ENCODE measurements at regions of chr3 and their contacts with region 1.

Region 1: DNA sequence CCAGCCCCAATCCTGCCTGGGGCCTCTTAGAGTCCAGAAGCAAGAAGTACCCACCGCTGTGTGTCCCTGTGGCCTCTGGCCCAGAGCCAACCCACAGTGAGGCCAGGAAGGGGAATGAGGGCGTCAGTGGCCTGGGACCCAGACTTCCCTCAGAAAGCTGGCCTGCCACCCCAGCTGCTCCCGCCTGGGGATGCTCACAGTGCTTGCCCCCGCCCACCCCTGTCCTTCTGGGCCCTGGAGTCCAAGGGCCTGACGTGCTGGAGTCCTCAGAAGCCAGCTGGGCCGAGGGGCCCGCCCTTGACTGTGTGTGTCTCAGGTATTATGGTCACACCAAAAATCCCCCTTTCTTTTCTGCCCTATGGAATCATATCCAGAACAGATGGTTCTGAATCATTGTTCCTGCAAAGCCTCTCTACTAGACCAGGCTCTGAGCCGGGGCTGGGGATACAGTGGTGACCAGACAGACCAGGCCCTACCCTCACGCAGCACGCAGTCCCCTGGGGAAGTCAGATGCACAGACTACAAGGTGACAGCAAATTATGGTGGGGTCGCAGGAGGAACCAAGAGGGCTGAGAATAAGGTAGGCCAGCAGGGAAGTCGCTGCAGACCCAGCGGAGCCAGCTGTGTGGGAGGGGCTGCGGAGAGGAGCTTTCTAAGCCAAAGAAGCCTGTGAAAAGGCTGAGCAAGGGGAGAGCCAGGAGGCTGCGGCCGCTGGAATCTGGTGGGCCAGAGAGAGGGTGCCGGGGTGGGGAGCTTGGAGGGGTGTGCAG is 99.1 kb downstream of the VGLL4 start:
- DNase-seq: no peak
- H3K4me3 ChIP-seq: no peak overlapping the region
- H3K27ac ChIP-seq: no peak overlapping the region
- H3K4me1 ChIP-seq: no peaks in the 10 kb centered on the region
- H3K27me3 ChIP-seq: no peaks in the 10 kb centered on the region
- CTCF ChIP-seq: no peak

Region 2: DNA sequence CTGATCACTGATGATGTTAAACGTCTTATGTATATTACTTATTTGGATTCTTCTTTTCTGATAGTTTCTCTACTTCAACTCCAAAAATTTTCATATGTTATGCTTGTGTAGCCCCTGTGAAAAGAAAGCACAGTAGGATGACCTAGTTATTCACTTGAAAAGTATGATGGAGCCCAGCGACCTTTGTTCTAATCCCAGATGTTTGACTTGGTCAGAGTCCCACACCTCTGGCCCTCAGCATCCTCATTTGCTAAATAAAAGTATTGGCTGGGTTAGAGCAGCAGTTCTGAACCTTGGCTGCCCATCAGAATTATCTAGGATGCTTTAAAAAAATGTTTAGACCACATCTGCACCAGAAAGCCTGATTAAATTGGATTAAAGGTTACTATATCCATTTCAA is 98.7 kb before region 1 on chr3:
- CTCF ChIA-PET with region 1: no interaction called
- dilution Hi-C with region 1: loop called (anchors 5 kb)
- in situ Hi-C with region 1: no loop called
- intact Hi-C with region 1: no loop called
- DNase-seq: no peak
- H3K4me3 ChIP-seq: no peak overlapping the region
- H3K27ac ChIP-seq: no peak overlapping the region
- H3K4me1 ChIP-seq: no peaks in the 10 kb centered on the region
- H3K27me3 ChIP-seq: no peaks in the 10 kb centered on the region
- CTCF ChIP-seq: no peak

Region 3: DNA sequence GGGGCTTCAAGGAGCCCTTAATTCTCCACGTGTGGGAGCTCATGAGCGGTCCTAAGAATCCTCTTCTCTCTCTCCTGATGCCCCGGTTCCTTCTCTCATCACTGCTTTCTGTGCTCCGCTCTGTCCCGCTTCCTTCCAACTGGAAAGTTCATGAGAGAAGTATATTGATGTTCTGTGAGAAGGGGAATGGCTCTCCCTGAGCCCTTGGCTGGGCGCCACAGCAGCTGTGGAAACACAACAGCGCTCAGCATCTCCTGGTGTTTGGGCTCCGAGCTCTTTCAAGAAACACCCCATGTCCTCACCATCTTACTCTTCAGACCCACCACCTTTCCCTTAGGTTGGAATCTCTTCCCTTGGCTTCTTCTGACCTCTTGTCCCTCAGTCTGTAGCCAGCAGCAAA is 62.6 kb before region 1 on chr3:
- CTCF ChIA-PET with region 1: no interaction called
- dilution Hi-C with region 1: loop called (anchors 5 kb)
- in situ Hi-C with region 1: no loop called
- intact Hi-C with region 1: no loop called
- DNase-seq: no peak
- H3K4me3 ChIP-seq: no peak overlapping the region
- H3K27ac ChIP-seq: no peak overlapping the region
- H3K4me1 ChIP-seq: peaks cover 22% of the 10 kb centered on the region
- H3K27me3 ChIP-seq: no peaks in the 10 kb centered on the region
- CTCF ChIP-seq: no peak

Region 4: GRCh38 chr3:11556851-11557644 is 12.5 kb after region 1 on chr3:
- CTCF ChIA-PET with region 1: no interaction called
- dilution Hi-C with region 1: no loop called
- in situ Hi-C with region 1: no loop called
- intact Hi-C with region 1: no loop called
- DNase-seq: no peak
- H3K4me3 ChIP-seq: no peak overlapping the region
- H3K27ac ChIP-seq: no peak overlapping the region
- H3K4me1 ChIP-seq: peaks cover 18% of the 10 kb centered on the region
- H3K27me3 ChIP-seq: no peaks in the 10 kb centered on the region
- CTCF ChIP-seq: no peak